Endothelial cell of umbilical vein (primary cell): ENCODE measurements at regions of chr17 and their contacts with region 1.

Region 1: DNA sequence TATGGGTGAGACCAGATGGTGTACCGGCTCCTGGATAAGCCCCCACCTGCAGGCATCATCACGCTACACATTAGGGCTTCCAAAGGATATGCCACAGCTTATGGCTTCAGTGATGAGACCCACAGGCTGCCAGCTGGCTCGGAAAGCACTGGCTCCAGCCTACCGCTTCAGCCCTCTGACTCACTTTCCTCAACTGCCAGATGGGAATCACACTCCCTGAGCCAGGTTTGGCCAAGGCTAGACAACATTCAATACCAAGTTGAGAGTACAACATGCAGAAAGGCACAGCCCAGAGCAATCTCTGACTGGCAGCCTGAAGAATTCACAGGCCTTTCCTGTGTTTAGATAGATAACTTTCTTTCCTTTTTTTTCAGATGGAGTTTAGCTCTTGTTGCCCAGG is 10.3 kb downstream of the CENPV start:
- DNase-seq: peak; percentile 58
- H3K4me3 ChIP-seq: no peak overlapping the region
- H3K27ac ChIP-seq: no peak overlapping the region
- H3K4me1 ChIP-seq: no peaks in the 10 kb centered on the region
- H3K27me3 ChIP-seq: no peaks in the 10 kb centered on the region
- CTCF ChIP-seq: no peak
- POLR2A ChIP-seq: no peak

Region 2: GRCh38 chr17:16232391-16232790 is 110.6 kb before region 1 on chr17:
- CTCF ChIA-PET with region 1: no interaction called
- POLR2A ChIA-PET with region 1: interaction called, 14 read pairs
- dilution Hi-C with region 1: no loop called
- intact Hi-C with region 1: no loop called
- DNase-seq: no peak
- H3K4me3 ChIP-seq: no peak overlapping the region
- H3K27ac ChIP-seq: no peak overlapping the region
- H3K4me1 ChIP-seq: peaks cover 4% of the 10 kb centered on the region
- H3K27me3 ChIP-seq: no peaks in the 10 kb centered on the region
- CTCF ChIP-seq: no peak
- POLR2A ChIP-seq: no peak

Region 3: DNA sequence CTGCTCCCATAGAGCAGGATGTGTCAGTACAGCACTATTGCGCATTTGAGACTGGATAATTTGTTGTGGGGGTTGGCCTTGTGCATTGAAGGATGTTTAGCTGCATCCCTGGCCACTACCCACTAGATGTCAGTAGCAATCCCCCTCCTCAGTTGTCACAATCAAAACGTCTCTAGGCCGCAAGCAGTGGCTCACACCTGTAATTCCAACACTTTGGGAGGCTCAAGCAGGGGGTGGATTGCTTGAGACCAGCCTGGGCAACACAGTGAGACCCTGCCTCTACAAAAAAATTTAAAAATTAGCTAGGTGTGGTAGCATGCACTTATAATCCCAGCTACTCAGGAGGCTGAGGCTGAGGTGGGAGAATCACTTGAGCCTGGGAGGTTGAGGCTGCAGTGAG is 38.1 kb before region 1 on chr17:
- CTCF ChIA-PET with region 1: interaction called, 13 read pairs
- POLR2A ChIA-PET with region 1: no interaction called
- dilution Hi-C with region 1: no loop called
- intact Hi-C with region 1: no loop called
- DNase-seq: peak; percentile 40
- H3K4me3 ChIP-seq: no peak overlapping the region
- H3K27ac ChIP-seq: no peak overlapping the region
- H3K4me1 ChIP-seq: no peaks in the 10 kb centered on the region
- H3K27me3 ChIP-seq: no peaks in the 10 kb centered on the region
- CTCF ChIP-seq: peak; percentile 24 to 61
- POLR2A ChIP-seq: no peak

Region 4: GRCh38 chr17:16353317-16354174 is 10.6 kb after region 1 on chr17 and contains the start of gene CENPV:
- CTCF ChIA-PET with region 1: interaction called, 20 read pairs
- POLR2A ChIA-PET with region 1: no interaction called
- dilution Hi-C with region 1: no loop called
- intact Hi-C with region 1: no loop called
- DNase-seq: peak; percentile 47
- H3K4me3 ChIP-seq: peak within 1 kb of the TSS; percentile 48 to 60 (median 49)
- H3K27ac ChIP-seq: peak within 1 kb of the TSS; percentile 2
- H3K4me1 ChIP-seq: peaks cover 10% of the 10 kb centered on the region
- H3K27me3 ChIP-seq: no peaks in the 10 kb centered on the region
- CTCF ChIP-seq: peak in 1 of 2 donors; percentile 9
- POLR2A ChIP-seq: no peak
- total RNA-seq, gene CENPV: 41.6 and 44.0 TPM in 2 replicates

Region 5: DNA sequence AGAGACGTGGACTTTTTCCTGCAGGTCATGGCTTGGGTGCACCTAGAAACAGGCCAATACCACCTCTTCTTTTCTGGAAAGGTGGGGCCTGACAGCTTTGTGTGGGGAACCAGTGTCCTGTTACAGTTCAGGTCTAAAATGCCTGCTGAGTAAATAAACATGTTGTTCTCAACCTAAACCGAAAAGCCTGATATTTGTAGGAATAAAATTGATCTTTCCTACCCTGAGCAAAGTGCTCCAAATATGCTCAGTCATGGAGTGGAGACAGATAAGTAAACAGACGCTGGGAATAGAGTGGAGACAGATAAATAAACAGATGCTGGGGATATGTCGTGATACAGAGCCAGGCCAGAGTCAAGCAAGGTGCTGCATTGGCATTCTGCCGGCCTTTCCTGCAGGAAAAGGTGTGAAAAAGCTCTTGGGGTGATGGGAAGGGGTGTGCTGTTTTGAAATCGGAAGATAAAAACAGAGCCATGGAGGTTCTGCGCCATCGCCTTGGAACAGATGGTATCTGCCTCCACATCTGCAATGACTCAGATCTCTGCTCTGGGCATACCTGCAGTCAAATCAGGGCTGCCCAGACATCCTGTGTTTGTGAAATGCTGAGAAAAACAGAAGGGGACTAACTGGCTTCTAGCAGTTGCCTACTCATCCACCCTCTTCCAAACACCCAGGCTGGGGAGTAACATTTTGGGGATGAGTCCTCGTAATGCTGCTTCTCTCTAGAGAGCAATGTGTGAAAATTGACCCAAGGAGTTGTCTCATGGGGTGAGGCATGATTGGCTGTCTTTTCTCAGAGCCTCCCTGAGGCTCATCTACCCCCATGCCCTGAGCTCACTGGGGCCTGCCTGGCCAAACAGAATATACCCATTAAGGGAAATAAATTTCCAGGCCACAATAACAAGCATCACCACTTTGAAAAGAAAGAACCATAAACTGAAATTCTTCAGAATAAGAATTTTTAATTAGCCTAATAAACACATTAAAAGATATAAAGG is 55.6 kb after region 1 on chr17:
- CTCF ChIA-PET with region 1: no interaction called
- POLR2A ChIA-PET with region 1: no interaction called
- dilution Hi-C with region 1: no loop called
- intact Hi-C with region 1: no loop called
- DNase-seq: peak; percentile 67
- H3K4me3 ChIP-seq: no peak overlapping the region
- H3K27ac ChIP-seq: peak overlapping the region; percentile 15
- H3K4me1 ChIP-seq: peaks cover 8% of the 10 kb centered on the region
- H3K27me3 ChIP-seq: peaks cover 0 to 2% of the 10 kb centered on the region in 2 experiments
- CTCF ChIP-seq: no peak
- POLR2A ChIP-seq: no peak

Region 6: GRCh38 chr17:16975744-16976625 is 633.0 kb after region 1 on chr17:
- CTCF ChIA-PET with region 1: no interaction called
- POLR2A ChIA-PET with region 1: interaction called, 10 read pairs
- dilution Hi-C with region 1: no loop called
- intact Hi-C with region 1: no loop called
- DNase-seq: no peak
- H3K4me3 ChIP-seq: no peak overlapping the region
- H3K27ac ChIP-seq: no peak overlapping the region
- H3K4me1 ChIP-seq: no peaks in the 10 kb centered on the region
- H3K27me3 ChIP-seq: peaks cover 6 to 8% of the 10 kb centered on the region in 2 experiments
- CTCF ChIP-seq: no peak
- POLR2A ChIP-seq: no peak